Activated T-helper 2 cell treated with anti-CD3 and anti-CD28 coated beads, Interferon-gamma antibody, Interleukin-2, Interleukin-4, amounts not matched to agents 10 μg/mL and 5 μg/mL and 100 μg/mL, durations not matched to agents 14 hours and 24 hours and 36 hours (primary cell): ENCODE measurements at regions of chr5 and their contacts with region 1.

Region 1: DNA sequence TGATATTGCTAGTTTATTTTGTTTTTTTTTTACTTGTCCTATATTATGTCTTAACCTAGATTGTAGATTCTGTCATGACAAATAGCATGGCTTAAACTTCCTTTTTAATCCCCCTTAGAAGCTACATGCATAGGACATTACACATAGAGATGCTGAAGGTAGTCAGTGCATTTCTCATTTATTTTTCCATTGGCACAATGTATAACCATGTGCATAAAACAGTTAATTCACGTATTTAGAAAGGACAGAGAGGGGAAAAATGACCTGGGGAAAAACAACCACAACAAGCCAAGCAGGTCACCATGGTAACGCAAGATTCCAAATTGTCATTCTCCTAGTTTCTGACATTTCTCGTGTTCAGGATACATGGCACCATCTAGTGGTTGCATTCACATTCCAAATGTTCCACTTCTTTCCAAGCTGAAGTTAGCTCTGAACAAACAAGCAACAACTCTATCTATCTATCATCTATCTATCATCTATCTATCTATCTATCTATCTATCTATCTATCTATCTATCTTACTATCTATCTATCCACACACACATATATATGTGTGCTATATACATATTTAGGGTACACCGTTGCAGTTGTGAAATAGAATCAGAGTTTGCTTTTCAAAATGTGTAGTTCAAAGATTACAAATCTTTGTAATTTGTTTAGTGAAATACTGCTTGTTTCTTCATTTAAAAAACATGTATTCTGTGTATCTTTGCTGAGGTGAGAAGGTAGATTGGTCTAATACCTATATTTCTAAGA is 487.2 kb upstream of the ST8SIA4 start:
- DNase-seq: no peak
- H3K4me3 Mint-ChIP-seq: no peak overlapping the region
- H3K27ac Mint-ChIP-seq: no peak overlapping the region
- H3K4me1 Mint-ChIP-seq: no peaks in the 10 kb centered on the region
- H3K27me3 Mint-ChIP-seq: no peaks in the 10 kb centered on the region

Region 2: DNA sequence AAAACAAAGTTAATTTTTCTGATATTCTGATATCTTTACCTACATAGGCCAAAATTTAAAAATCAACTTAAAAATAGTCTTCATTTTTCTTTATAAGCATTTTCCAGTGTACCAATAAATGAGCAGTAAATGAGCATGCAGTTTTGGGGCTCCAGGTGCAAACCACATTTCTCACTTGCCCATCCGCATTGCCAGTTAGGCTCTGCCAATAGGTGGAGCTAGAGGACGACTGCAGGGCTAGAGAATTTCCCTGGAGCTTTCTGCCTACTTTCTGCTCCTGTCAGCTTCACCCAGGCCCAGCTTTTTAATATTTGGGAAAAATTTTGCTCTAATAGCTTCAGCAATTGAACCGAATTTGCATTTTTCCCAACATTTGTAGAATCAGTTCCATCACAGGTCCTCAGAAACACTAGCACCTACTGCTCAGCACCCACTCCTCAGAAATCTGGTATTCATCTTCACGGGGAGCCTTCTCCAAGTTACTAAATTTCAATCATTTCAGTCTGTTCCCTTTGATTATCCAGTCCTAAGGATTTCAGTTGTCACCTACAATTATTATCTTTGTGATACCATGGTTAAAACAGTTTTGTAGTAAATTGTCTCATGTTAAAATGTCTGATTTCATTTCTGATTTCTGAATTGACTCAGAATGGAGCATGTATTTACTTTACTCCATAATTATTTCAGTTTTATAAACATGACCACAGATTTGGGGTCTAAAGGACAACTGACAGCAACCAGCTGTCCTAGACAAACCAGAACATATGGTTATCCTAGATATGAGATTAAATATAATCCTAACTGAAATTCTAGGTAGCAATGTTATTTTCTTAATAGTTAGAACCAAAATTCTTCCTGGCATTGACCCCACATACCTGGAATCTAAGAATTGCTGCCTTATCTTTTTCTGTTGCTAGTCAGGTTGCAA is 959.8 kb before region 1 on chr5:
- intact Hi-C with region 1: loop called (anchors 2 kb)
- DNase-seq: peak; percentile 14
- H3K4me3 Mint-ChIP-seq: no peak overlapping the region
- H3K27ac Mint-ChIP-seq: no peak overlapping the region
- H3K4me1 Mint-ChIP-seq: no peaks in the 10 kb centered on the region
- H3K27me3 Mint-ChIP-seq: peaks cover 7% of the 10 kb centered on the region

Region 3: DNA sequence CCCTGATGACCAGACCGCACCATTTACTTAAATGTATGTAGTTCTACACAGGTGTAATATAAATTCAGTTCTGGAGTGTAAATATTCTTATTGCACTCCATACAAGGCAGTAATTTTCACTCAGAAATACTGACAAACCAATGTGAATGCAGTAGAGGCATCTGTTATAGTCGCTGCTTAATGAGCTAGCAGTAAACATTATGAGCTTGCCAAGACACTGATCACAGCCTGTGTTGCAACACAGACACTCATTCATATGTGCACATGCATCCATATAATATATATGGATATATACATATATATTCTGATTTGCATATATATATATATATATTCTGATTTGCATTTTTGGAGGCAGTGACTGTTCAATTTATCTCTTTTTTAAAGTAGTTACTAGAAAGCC is 52.1 kb before region 1 on chr5:
- intact Hi-C with region 1: no loop called
- DNase-seq: no peak
- H3K4me3 Mint-ChIP-seq: no peak overlapping the region
- H3K27ac Mint-ChIP-seq: no peak overlapping the region
- H3K4me1 Mint-ChIP-seq: no peaks in the 10 kb centered on the region
- H3K27me3 Mint-ChIP-seq: no peaks in the 10 kb centered on the region

Region 4: DNA sequence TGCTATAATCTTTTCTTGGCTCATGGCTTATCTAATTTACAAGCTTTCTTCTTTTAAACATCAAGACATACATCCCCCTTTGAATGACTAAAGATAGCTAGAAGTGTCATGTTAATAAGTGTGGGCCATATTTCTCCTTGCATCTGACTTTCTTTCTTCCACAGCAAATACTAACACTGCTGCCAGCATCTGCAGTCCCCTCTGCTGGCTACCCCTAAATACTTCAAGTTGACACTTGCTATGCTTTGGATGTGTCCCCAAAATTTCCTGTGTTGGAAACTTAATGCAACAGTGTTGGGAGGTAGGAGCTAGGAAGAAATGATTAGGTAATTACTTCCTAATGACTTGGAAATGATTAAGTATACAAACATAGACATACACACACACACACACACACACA is 28.3 kb before region 1 on chr5:
- intact Hi-C with region 1: no loop called
- DNase-seq: no peak
- H3K4me3 Mint-ChIP-seq: no peak overlapping the region
- H3K27ac Mint-ChIP-seq: no peak overlapping the region
- H3K4me1 Mint-ChIP-seq: no peaks in the 10 kb centered on the region
- H3K27me3 Mint-ChIP-seq: no peaks in the 10 kb centered on the region

Region 5: DNA sequence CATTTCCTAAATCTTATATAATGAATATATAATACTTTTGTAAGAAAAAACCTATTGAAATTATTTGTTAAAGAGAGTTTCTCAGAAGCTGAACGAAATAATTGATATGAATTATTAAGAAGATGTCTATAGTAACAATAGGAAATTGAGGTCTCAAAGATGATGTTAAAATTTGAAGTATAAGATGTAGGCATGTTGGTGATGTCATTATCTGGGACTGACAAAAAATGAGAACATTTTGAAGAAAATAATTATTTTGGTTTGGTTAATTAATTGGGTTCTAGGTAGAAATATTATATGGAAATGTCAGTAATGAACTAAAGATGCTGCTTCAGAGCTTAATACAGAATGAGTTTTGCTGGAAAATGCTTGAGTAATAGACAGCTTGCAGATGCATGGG is 14.2 kb after region 1 on chr5:
- intact Hi-C with region 1: no loop called
- DNase-seq: no peak
- H3K4me3 Mint-ChIP-seq: no peak overlapping the region
- H3K27ac Mint-ChIP-seq: no peak overlapping the region
- H3K4me1 Mint-ChIP-seq: no peaks in the 10 kb centered on the region
- H3K27me3 Mint-ChIP-seq: no peaks in the 10 kb centered on the region